PC-9 (cell line): ENCODE measurements at regions of chr12 and their contacts with region 1.

Region 1: GRCh38 chr12:26153421-26154154 is 28.8 kb upstream of the BHLHE41 start:
- DNase-seq: peak; percentile 61 to 97
- H3K4me3 ChIP-seq: peak overlapping the region; percentile 17; the same call in 1 of the 2 replicates
- H3K27ac ChIP-seq: peak overlapping the region; percentile 75
- H3K4me1 ChIP-seq: peaks cover 49% of the 10 kb centered on the region
- H3K27me3 ChIP-seq: no peaks in the 10 kb centered on the region
- CTCF ChIP-seq: peak; percentile 43; the same call in 1 of the 2 replicates

Region 2: DNA sequence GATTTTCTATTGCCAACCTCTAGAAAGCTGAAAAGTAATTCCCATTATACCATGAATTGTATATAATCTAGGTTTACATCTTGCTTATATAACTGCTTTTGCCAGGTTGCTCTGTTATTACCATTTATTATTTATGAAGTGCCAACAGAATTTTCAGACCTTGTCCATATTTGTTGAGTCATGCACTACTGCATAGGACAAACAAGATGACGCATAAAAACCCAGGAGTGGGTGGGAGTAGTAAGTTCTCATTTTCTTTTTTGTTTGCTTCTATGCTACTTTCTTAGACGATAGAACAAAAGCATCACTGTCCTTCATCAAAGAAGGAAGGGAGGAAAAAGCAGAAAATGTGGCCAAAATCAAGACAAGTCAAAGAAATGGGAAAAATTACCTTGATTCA is 314.1 kb before region 1 on chr12:
- CTCF ChIA-PET with region 1: no interaction called
- POLR2A ChIA-PET with region 1: no interaction called
- intact Hi-C with region 1: no loop called
- DNase-seq: no peak
- H3K4me3 ChIP-seq: no peak overlapping the region
- H3K27ac ChIP-seq: no peak overlapping the region
- H3K4me1 ChIP-seq: no peaks in the 10 kb centered on the region
- H3K27me3 ChIP-seq: no peaks in the 10 kb centered on the region
- CTCF ChIP-seq: no peak

Region 3: GRCh38 chr12:26113853-26114719 is 39.5 kb before region 1 on chr12:
- CTCF ChIA-PET with region 1: no interaction called
- POLR2A ChIA-PET with region 1: interaction called, 12 read pairs
- intact Hi-C with region 1: no loop called
- DNase-seq: peak; percentile 91 to 92
- H3K4me3 ChIP-seq: peak overlapping the region; percentile 57
- H3K27ac ChIP-seq: peak overlapping the region; percentile 93
- H3K4me1 ChIP-seq: peaks cover 61% of the 10 kb centered on the region
- H3K27me3 ChIP-seq: no peaks in the 10 kb centered on the region
- CTCF ChIP-seq: peak; percentile 46

Region 4: DNA sequence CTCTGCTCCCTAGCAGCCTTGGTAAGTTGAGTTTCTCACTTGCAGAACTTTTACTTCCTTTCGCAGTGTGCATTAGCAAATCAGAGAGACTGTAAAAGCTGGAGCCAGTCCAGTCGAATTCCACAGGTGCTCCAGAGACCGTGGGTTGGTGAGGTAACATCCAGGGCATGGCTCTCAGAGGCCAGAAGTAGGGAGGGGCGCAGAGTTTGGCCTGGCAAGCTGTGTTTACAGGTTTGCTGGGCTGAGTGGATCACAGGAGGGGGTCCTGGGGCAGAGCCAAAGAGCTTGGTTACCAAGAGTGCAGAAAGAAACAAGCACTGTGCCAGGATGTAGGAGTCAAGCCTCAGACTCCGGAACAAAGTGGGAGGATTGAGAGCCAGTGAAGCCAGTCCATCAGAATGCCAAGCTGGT is 18.6 kb before region 1 on chr12:
- CTCF ChIA-PET with region 1: no interaction called
- POLR2A ChIA-PET with region 1: interaction called, 9 read pairs
- intact Hi-C with region 1: loop called (anchors 1 kb)
- DNase-seq: peak; percentile 93 to 95
- H3K4me3 ChIP-seq: no peak overlapping the region
- H3K27ac ChIP-seq: peak overlapping the region; percentile 45
- H3K4me1 ChIP-seq: peaks cover 33% of the 10 kb centered on the region
- H3K27me3 ChIP-seq: no peaks in the 10 kb centered on the region
- CTCF ChIP-seq: no peak

Region 5: DNA sequence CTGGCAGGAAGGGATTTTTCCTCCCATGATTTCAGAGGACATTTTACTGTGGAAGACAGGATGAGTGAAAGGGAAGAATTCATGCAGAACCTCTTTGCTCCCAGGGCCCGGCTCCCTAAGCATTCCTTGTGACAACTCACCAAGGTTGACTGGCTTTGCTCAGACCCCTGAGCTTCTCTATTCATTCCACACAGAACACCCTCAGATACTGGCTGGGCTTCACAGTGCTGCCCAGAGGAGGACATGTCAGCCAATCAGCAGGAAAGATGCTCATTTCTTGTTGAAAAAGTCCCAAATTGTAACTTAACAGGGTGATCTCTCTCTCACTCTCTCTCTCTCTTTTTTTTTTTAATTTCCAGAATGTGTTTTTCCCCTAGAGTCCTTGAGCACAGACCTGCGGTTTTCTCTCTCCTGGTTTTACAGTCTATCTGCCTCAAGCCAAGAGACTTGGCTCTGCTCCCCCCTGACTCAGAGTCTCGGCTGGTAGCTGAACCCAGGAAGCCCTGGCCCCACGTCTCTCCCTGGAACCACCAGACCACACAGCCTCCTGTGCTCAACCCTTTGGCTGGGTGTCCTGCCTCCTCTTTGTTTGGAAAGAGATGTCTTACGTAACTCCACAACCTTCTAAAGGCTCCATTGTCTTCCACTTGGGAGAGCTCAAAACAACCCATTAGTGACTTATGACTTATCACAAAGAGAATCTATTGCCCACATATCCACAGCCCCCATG is 85.7 kb after region 1 on chr12:
- CTCF ChIA-PET with region 1: no interaction called
- POLR2A ChIA-PET with region 1: no interaction called
- intact Hi-C with region 1: loop called (anchors 2 kb)
- DNase-seq: peak; percentile 91 to 99
- H3K4me3 ChIP-seq: peak overlapping the region; percentile 23; the same call in 1 of the 2 replicates
- H3K27ac ChIP-seq: peak overlapping the region; percentile 85
- H3K4me1 ChIP-seq: peaks cover 72% of the 10 kb centered on the region
- H3K27me3 ChIP-seq: no peaks in the 10 kb centered on the region
- CTCF ChIP-seq: no peak

Region 6: DNA sequence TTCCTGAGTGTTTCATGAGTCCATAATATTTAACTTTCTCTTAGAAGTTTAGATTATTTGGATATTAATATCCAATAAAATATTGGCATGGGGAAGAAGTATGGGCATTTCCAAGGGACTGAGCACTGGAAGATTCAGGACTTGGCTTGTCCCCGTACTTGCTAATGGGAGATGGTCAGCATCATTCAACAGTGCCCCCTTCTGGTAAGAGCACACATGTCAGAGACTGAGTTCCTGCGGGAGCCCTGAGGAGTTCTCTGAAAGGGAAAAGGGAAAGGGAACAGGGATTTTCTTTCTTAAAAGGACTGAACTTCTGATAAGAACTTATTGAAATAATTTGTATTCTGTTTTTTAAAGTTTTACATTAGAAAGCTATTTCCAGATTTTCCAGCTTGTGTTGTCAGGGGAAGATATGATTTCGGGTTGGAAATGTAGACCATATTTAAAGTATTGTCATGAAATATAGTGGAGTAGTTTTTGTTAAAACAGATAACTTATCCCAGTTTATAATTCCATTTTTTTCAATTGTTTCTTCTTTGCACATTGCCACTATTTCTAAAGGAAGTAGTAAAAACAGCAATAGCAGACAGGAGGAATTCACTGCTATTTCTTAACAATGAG is 988.6 kb after region 1 on chr12:
- CTCF ChIA-PET with region 1: no interaction called
- POLR2A ChIA-PET with region 1: no interaction called
- intact Hi-C with region 1: no loop called
- DNase-seq: peak; percentile 44 to 64
- H3K4me3 ChIP-seq: no peak overlapping the region
- H3K27ac ChIP-seq: no peak overlapping the region
- H3K4me1 ChIP-seq: no peaks in the 10 kb centered on the region
- H3K27me3 ChIP-seq: no peaks in the 10 kb centered on the region
- CTCF ChIP-seq: peak; percentile 89